Left cardiac atrium (tissue), 4 donors: ENCODE measurements at regions of chr16 and their contacts with region 1.

Region 1: DNA sequence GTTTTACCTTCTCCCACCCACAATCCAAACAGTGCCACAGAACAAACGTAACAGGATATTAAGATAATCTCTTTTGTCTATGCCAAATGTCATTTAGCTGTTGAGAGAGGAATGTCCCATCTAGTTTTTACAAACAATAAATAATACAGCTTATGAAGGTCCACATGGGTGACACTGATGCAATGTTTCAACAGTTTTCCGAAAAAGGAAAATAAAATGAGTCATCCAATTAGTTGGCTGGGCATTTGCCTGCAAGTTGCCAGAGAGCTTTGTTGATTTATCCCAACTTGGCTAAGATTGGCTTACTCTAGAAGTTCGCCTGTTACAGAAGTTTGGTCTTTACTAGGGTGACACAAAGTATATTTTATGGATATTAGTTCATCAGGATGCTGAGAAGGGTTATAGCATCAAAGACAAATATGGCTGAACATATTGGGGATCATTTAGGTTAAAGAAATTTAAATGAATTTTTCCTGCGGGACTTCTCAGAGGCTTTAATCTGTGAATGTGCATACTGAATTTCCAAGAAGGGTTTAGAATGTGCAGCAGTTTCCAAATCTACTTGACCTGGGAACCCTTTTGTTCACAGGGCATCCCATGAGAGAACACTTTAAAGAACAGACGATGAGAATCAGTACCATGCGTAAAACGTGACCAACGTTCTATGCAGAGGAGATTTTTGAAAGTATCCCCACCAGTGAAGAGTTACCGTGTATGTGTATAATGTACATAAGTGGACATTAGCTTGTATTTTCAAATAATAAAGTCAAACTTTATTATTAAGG is 73.1 kb downstream of the CDH13 start:
- DNase-seq: no peak
- ATAC-seq: peak; percentile 77 to 83

Region 2: GRCh38 chr16:82629441-82630027 is 70.4 kb before region 1 on chr16:
- intact Hi-C with region 1: no loop called
- DNase-seq: no peak
- ATAC-seq: peak in 1 of 2 donors; percentile 6

Region 3: DNA sequence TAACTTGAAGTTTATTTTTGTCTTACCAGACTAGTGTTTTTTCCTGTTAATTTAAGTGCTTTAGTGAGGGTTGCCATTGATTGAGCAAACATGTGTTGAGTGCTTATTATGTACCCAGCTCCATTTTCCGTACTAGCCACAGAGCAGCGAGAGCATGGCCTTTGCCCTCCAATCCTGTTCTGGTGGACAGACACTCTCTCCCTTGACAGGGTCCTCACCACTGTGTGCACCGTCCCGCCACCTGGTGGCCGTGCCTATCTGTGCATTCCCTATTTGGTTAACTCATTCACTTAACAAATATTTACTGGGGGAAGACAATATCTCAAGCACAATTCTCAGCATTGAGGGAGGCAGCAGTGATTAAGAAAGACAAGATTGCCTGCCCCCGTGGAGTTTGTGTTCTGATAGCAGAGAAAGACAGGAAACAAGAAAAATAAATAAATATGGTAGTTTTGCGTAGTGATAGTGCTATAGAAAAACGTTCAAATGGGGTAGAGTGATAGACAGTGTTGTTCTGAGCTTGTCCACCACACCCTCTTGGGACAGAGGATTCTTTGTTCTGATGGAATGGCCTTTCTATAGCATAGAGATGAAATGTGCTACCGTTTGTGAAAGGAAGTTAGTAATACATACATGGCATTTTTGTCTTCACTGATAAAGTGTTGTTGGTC is 60.1 kb before region 1 on chr16:
- intact Hi-C with region 1: loop called in 1 of 2 experiments (anchors 5 kb)
- DNase-seq: peak; percentile 67
- ATAC-seq: peak; percentile 68 to 76

Region 4: GRCh38 chr16:82660075-82660645 is 39.7 kb before region 1 on chr16:
- intact Hi-C with region 1: loop called in 1 of 2 experiments (anchors 5 kb)
- DNase-seq: no peak
- ATAC-seq: no peak